HEK293T (cell line): ENCODE measurements at regions of chr11 and their contacts with region 1.

Region 1: GRCh38 chr11:33039274-33040032 is at the start of gene TCP11L1:
- DNase-seq: peak; percentile 81

Region 2: GRCh38 chr11:32884770-32885384 is 154.6 kb before region 1 on chr11:
- CTCF ChIA-PET with region 1: no interaction called
- POLR2A ChIA-PET with region 1: no interaction called
- DNase-seq: no peak

Region 3: GRCh38 chr11:33015621-33016551 is 23.6 kb before region 1 on chr11 and contains the start of gene DEPDC7:
- CTCF ChIA-PET with region 1: no interaction called
- POLR2A ChIA-PET with region 1: interaction called, 29 read pairs
- DNase-seq: peak; percentile 96

Region 4: DNA sequence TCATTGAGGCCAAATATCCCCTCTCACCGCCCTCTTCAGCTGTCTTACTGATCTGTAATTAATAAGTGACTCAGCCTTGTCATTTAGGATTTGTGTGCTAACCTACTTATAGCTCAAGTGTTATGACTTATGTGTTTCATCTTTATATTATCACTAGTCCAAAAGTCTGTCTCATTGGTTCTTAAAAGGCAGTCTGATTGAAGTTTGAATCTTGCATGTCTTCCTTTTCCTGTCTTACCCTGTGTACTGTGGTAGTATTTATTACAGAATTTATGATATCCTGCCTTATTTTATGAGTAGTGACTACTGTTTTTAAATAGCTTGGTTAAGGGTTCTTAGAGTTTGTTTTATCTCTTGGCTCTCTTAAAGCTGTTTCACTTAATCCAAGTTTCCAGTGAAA is 17.5 kb before region 1 on chr11:
- CTCF ChIA-PET with region 1: interaction called, 3 read pairs
- POLR2A ChIA-PET with region 1: interaction called, 29 read pairs
- DNase-seq: no peak